ENCODE measurements at regions of chr15 and their contacts with region 1.

Region 1: GRCh38 chr15:51737280-51738017 is at the start of gene LYSMD2:
- DNase-seq: peak; percentile 68
- H3K4me3 Mint-ChIP-seq: peak within 1 kb of the TSS; percentile 81
- H3K27ac Mint-ChIP-seq: peak within 1 kb of the TSS; percentile 80
- H3K4me1 Mint-ChIP-seq: peaks cover 47% of the 10 kb centered on the region
- H3K27me3 Mint-ChIP-seq: no peaks in the 10 kb centered on the region
- total RNA-seq, gene LYSMD2: 14.8 to 14.9 TPM

Region 2: DNA sequence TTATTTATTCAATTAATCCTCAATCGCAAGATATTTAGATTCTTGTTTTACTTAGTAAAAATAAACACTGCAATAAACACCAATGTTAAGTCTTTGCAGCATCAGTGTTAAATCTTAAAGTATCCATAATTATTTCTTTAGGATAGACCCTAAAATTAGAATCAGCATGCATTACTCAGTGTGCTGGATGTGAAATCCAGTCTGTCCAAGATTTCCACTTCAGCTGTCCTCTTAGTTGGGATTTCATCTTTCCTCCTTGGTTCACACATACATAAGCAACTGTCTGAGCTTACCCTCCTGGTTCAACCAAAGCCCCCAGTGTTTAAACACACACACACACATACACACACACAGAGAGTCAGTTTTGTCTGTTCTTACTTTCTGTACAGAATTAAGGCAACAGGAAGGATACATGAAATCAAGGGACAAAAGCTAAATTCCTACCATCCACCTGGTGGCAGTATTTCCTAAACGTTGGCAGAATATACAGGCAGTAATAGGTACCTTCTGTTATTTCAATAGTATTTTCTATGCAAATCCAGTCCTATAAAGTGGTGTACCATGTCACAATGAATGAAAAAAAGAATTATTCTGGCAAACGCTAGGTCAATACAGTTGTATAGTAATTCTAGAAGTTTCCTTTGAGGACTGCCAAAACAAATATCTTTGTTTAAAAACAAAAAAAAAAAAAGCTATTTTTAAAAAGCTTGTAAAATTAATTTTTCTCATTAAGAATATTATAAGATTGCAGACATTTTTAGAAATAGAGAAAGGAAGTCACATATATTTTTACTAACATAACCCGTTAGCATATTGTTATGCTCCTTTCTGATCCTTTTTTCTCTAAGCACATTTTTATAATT is 87.6 kb before region 1 on chr15:
- CTCF ChIA-PET with region 1: interaction called, 11 read pairs
- POLR2A ChIA-PET with region 1: no interaction called
- DNase-seq: peak; percentile 32
- H3K4me3 Mint-ChIP-seq: no peak overlapping the region
- H3K27ac Mint-ChIP-seq: no peak overlapping the region
- H3K4me1 Mint-ChIP-seq: peaks cover 4% of the 10 kb centered on the region
- H3K27me3 Mint-ChIP-seq: peaks cover 8% of the 10 kb centered on the region

Region 3: DNA sequence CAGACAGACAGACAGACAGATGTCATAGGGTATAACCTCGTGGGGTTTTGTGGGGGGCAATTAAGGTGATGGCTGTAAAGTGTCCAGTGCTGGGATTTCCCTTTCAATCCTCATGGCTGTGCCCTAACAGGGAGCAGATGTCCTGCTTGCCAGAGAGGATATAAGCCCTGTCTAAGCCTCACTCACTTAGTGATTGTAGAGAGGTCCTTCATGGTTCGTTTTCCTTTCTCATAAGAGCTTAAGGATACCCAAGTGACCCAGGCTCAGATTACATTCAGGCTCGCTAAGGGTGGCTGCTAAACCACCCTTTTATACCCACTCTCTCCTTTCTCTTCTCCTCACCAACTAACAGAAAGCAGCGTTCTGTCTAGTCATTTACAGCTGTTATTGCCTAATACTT is 19.2 kb before region 1 on chr15:
- CTCF ChIA-PET with region 1: no interaction called
- POLR2A ChIA-PET with region 1: no interaction called
- DNase-seq: no peak
- H3K4me3 Mint-ChIP-seq: no peak overlapping the region
- H3K27ac Mint-ChIP-seq: no peak overlapping the region
- H3K4me1 Mint-ChIP-seq: peaks cover 4% of the 10 kb centered on the region
- H3K27me3 Mint-ChIP-seq: no peaks in the 10 kb centered on the region

Region 4: DNA sequence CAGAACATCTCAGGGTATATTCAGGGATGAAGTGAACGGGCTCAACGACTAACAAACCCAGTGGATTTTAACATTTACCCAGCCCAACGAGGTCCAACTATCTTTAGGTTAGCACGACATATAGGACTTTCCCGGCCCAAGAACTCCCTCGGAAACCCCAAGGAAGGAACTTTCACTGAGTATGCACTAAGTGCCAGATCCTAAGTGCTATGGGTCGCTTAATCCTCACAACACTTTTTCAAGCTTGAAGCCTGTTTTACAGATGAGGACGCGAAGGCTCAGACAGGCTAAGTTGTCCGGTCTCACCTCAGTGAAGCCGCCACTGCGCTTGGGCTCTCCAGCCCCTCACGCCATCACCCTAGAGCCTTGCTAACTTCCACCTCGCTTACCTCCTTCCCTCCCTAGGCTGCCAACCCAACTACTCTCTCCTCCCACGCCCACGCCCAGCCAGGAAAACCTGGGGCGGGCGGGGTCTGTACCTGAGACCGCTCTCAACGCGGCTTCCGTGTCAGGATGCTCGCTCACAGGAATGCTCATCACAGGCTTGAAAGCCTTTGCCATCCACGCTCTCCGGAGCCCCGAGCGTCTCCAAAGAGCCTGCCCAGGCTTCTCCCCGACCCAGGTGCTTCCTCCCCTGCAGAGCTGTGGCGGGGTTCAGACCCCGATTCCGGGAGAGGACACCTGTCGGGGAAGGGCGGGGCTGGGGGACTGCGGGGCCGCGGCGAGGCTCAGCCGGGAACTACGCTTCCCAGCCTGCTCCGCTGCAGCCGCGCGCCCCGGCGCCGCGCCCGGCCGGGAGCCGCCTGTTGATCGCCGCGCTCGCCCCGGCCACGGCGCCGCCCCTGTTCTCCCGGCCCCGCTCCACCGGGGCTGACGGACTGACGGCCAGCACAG is 13.6 kb after region 1 on chr15 and contains the start of gene TMOD2:
- CTCF ChIA-PET with region 1: interaction called, 3 read pairs
- POLR2A ChIA-PET with region 1: interaction called, 16 read pairs
- DNase-seq: peak; percentile 50
- H3K4me3 Mint-ChIP-seq: peak within 1 kb of the TSS; percentile 77
- H3K27ac Mint-ChIP-seq: no peak within 1 kb of the TSS
- H3K4me1 Mint-ChIP-seq: peaks cover 24% of the 10 kb centered on the region
- H3K27me3 Mint-ChIP-seq: peaks cover 33% of the 10 kb centered on the region
- total RNA-seq, gene TMOD2: 6.2 to 6.5 TPM

Measured in activated CD4-positive, alpha-beta memory T cell treated with anti-CD3 and anti-CD28 coated beads, Interleukin-2, amount 10 ng/mL, durations not matched to agents 7 days and 5 days (primary cell).